ENCODE measurements at regions of chr22 and their contacts with region 1.

Region 1: GRCh38 chr22:17726464-17727246 is 47.6 kb downstream of the BID start:
- DNase-seq: no peak

Region 2: DNA sequence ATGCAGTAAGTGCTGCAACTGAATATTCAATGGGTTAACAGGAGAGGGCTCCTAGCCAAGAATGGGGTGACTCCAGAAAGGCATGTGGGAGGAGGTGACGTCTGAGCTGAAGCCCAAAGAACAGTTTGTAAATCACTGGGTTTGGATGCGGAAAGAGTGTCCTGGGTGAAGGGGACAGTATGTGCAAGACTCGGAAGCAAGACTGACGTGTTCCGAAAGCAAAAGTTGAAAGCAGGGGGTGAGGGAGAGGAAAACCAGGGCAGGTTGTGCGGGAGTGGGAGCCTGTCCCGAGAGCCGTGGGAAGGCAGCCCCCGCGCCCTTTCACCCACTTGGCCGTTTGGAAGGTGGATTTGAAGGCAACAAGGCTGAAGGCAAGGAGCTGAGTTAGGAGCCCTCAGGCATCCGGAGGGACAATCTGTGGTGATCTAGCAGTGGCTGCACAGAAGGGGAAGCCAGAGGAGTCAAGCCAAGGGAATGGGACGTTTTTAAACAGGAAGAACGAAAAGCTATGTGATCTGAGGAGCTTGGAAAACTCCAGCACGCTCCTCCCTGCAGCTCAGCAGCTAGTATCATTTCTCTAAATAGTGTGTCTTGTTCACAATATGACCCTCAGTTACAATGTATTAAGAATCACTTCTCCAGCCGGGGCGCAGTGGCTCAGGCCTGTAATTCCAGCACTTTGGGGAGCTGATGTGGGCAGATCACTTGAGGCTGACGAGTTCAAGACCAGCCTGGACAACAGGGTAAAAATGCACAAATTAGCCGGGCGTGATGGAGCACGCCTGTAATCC is 155.6 kb before region 1 on chr22:
- intact Hi-C with region 1: loop called in 1 of 2 experiments (anchors 10 kb)
- DNase-seq: peak; percentile 88

Region 3: DNA sequence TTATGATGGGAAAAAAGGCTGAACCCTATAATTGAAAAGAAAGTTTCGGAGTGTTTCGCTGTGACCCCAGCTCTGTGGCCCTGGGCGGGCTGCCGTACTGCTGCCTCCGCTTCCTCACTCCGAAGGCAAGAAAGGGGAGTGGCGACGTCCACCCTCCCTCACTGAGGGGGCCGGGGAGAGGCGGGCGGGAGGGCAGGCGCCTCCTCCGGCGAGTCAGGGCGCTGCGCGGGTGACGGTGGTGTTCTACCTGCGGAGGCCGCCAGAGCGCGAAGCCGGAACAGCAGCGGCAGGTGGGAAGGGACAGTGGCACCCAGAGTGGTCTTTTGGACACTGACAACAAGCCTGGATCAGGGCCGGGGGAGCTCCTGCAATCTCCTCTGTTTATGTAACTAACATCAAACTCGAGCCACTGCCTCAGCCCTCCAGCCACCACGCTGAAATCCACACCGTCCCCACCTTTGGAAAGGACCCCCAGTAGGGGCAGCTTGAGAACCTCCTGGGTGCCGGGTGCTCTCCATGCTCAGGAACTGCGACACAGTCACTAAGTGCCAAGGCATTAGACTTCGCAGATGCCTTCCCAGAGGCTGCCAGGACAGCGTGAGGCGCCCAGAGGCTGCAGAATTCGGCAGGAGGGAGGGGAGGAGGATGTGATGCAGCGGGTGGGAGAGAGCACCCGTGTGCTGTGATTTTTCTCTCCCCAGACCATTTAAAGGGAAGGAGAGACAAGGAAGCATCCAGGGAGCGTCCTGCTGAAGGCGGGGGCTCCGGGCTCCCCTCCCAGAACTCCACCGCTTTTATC is 22.1 kb after region 1 on chr22:
- intact Hi-C with region 1: loop called in 1 of 2 experiments (anchors 1 kb)
- DNase-seq: peak; percentile 68

Measured in posterior vena cava (tissue), 2 donors.